ENCODE measurements at regions of chr19 and their contacts with region 1.

Region 1: GRCh38 chr19:16514383-16515019 is 18.3 kb downstream of the C19orf44 start:
- DNase-seq: no peak
- ATAC-seq: no peak
- H3K4me3 Mint-ChIP-seq: no peak overlapping the region
- H3K27ac Mint-ChIP-seq: no peak overlapping the region
- H3K4me1 Mint-ChIP-seq: no peaks in the 10 kb centered on the region
- H3K27me3 Mint-ChIP-seq: no peaks in the 10 kb centered on the region
- CTCF ChIP-seq: no peak

Region 2: DNA sequence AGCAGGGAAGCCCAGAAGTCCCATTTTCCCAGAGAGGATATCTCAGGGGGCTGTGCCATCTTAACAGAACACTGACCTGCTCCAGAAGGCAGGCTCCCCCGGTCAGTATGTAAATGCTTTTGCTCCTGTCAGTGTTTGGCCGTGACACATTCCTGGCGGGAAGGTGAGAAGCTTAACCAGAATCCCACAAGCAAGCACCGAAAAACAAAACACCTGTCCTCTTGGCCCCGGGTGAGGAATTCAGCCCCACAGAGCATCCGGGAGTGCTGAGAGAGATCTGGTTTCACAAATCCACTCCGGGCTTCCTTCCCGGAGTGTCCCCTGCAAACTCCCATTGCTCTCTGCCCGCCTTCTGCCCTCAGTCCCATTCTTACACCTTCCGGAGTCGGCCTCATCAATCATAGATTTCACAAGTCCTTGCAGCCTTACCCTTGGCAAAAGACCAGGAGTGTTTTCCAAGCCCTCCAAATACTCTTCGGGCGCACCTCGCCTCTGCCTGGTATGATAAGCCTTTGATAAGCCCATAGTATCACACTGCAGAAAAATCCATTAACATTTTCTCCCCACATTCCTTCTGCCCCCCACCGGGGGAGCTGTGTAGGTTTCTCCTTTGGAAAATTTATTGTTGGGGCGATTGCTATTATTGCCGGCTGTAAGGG is 426.0 kb before region 1 on chr19:
- CTCF ChIA-PET with region 1: no interaction called
- POLR2A ChIA-PET with region 1: no interaction called
- intact Hi-C with region 1: no loop called
- DNase-seq: no peak
- ATAC-seq: no peak
- H3K4me3 Mint-ChIP-seq: no peak overlapping the region
- H3K27ac Mint-ChIP-seq: no peak overlapping the region
- H3K4me1 Mint-ChIP-seq: peaks cover 22% of the 10 kb centered on the region
- H3K27me3 Mint-ChIP-seq: no peaks in the 10 kb centered on the region
- CTCF ChIP-seq: no peak

Region 3: GRCh38 chr19:16441661-16442162 is 72.8 kb before region 1 on chr19:
- CTCF ChIA-PET with region 1: no interaction called
- POLR2A ChIA-PET with region 1: no interaction called
- intact Hi-C with region 1: loop called (anchors 2 kb)
- DNase-seq: no peak
- ATAC-seq: no peak
- H3K4me3 Mint-ChIP-seq: no peak overlapping the region
- H3K27ac Mint-ChIP-seq: peak overlapping the region; percentile 95
- H3K4me1 Mint-ChIP-seq: peaks cover 82% of the 10 kb centered on the region
- H3K27me3 Mint-ChIP-seq: no peaks in the 10 kb centered on the region
- CTCF ChIP-seq: no peak